GM18951 (cell line): ENCODE measurements at regions of chr16 and their contacts with region 1.

Region 1: GRCh38 chr16:55842369-55843104 is 9.6 kb upstream of the CES1 start:
- POLR2A ChIP-seq: no peak

Region 2: DNA sequence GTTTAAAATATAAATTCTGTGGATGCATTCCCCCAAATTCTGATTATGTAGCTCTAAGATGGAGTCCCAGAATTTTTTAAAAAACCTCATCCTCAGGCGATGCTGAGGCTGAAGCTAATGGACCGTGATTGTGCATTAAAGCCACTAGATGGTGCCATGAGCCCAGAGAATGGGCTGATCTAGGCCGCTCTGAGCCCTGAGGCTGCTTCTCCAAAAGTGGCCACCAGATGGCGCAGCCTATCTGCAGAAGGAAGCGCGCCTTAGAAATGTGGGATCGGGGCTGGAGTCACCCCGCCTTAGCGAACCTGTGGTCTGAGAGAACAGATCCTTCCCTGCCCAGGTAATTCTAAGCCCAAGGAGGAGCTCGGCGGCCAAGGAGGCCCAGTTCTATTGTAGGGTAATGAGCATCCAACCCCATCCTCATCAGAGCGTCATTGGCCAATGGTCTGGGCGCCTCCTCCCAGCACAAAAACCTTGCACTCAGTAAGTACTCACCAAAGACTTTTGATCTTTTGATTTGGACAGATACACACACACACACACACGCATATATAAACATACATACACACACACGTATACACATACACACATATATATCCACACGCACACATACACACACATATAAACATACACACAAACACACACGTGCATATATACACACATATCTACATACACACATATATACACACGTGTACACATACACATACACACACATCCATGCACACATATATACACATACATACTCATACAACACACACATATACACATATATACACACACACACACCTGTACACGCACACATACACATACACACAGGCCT is 377.2 kb before region 1 on chr16:
- in situ Hi-C with region 1: loop called (anchors 10 kb)
- POLR2A ChIP-seq: no peak

Region 3: GRCh38 chr16:55728797-55729196 is 113.7 kb before region 1 on chr16:
- in situ Hi-C with region 1: no loop called
- POLR2A ChIP-seq: no peak

Region 4: DNA sequence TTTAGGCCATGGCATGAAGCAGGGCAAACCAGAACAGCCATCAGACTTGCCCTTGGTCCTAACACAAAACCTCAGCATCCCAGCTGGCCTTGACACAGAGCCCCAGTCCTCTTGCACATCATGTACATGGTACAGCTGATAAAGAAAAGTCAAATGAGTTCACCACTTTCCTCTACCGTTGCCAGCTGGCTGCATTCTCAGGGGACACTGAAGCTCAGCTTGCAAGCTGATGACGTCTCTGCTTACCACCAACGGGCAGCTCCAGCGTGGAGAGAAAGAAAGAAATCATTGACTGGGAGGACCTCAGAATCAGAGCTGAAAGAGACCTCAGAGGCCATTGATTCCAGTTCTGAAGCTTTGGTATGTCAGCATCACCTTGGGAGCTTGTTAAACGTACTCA is 113.3 kb after region 1 on chr16:
- in situ Hi-C with region 1: no loop called
- POLR2A ChIP-seq: no peak